ENCODE measurements at regions of chr18 and their contacts with region 1.

Region 1: GRCh38 chr18:49510393-49511115 is 23.5 kb upstream of the C18orf32 start:
- DNase-seq: peak; percentile 39 to 53 (median 43)
- ATAC-seq: peak; percentile 84
- H3K4me3 ChIP-seq: no peak overlapping the region
- H3K27ac ChIP-seq: no peak overlapping the region
- H3K4me1 ChIP-seq: peaks cover 0 to 4% of the 10 kb centered on the region in 2 experiments; a peak in 3 of 5 replicates
- H3K27me3 ChIP-seq: peaks cover 2 to 4% of the 10 kb centered on the region in 2 experiments; a peak in 2 of 5 replicates
- CTCF ChIP-seq: peak; percentile 71 to 79 (median 73)
- EP300 ChIP-seq: no peak
- POLR2A ChIP-seq: no peak
- RAD21 ChIP-seq: peak; percentile 77 to 84

Region 2: GRCh38 chr18:49561289-49562193 is 51.0 kb after region 1 on chr18 and contains the start of gene LIPG:
- CTCF ChIA-PET with region 1: no interaction called
- POLR2A ChIA-PET with region 1: no interaction called
- in situ Hi-C with region 1: no loop called
- intact Hi-C with region 1: loop called (anchors 2 kb)
- DNase-seq: peak; percentile 75 to 80 (median 78)
- ATAC-seq: peak; percentile 94
- H3K4me3 ChIP-seq: peak within 1 kb of the TSS; percentile 18; the same call in 1 of the 2 replicates
- H3K27ac ChIP-seq: no peak within 1 kb of the TSS
- H3K4me1 ChIP-seq: peaks cover 0 to 23% of the 10 kb centered on the region in 2 experiments; a peak in 4 of 5 replicates
- H3K27me3 ChIP-seq: peaks cover 0 to 21% of the 10 kb centered on the region in 2 experiments; a peak in 3 of 5 replicates
- CTCF ChIP-seq: no peak
- EP300 ChIP-seq: no peak
- POLR2A ChIP-seq: no peak
- RAD21 ChIP-seq: no peak
- polyA plus RNA-seq, gene LIPG: 0.76 to 1.6 TPM

Region 3: DNA sequence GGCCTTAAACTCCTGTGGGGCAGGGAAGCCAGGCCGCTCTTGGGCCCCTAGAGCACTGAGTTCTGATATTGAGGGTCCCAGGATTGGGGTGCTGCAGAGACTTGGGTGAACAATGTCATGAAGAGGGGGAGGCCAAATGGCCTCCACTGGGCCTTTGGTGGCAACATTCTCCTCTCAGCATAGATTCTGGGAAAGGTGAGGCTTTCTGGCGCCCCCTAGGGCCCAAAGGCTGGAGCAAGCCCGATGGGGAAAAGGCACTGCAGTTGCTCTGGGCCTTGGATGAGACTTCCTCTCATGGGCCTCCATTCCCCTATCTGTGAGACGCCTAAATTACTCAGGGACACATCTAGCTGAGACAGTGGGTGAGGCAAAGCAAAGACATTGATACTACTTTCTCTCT is 218.0 kb after region 1 on chr18:
- CTCF ChIA-PET with region 1: interaction called, 4 read pairs
- POLR2A ChIA-PET with region 1: no interaction called
- in situ Hi-C with region 1: no loop called
- intact Hi-C with region 1: loop called (anchors 5 kb)
- DNase-seq: peak; percentile 37 to 65 (median 44)
- ATAC-seq: peak; percentile 90
- H3K4me3 ChIP-seq: no peak overlapping the region
- H3K27ac ChIP-seq: no peak overlapping the region
- H3K4me1 ChIP-seq: peaks cover 0 to 10% of the 10 kb centered on the region in 2 experiments; a peak in 4 of 5 replicates
- H3K27me3 ChIP-seq: no peaks in the 10 kb centered on the region; a peak in 2 of 5 replicates
- CTCF ChIP-seq: peak; percentile 64 to 71 (median 68)
- EP300 ChIP-seq: no peak
- POLR2A ChIP-seq: no peak
- RAD21 ChIP-seq: peak; percentile 54 to 70

Region 4: GRCh38 chr18:49768051-49768391 is 257.5 kb after region 1 on chr18:
- CTCF ChIA-PET with region 1: interaction called, 3 read pairs
- POLR2A ChIA-PET with region 1: no interaction called
- in situ Hi-C with region 1: no loop called
- intact Hi-C with region 1: loop called (anchors 1 kb)
- DNase-seq: peak in 3 of 4 experiments; percentile 12 to 43 (median 21)
- ATAC-seq: peak; percentile 78
- H3K4me3 ChIP-seq: no peak overlapping the region
- H3K27ac ChIP-seq: no peak overlapping the region
- H3K4me1 ChIP-seq: no peaks in the 10 kb centered on the region
- H3K27me3 ChIP-seq: peaks cover 0 to 8% of the 10 kb centered on the region in 2 experiments; a peak in 1 of 5 replicates
- CTCF ChIP-seq: peak; percentile 44 to 56 (median 51); a peak in 5 of 6 replicates
- EP300 ChIP-seq: no peak
- POLR2A ChIP-seq: no peak
- RAD21 ChIP-seq: peak; percentile 55 to 67